Lower leg skin (tissue), 4 donors: ENCODE measurements at regions of chr1 and their contacts with region 1.

Region 1: DNA sequence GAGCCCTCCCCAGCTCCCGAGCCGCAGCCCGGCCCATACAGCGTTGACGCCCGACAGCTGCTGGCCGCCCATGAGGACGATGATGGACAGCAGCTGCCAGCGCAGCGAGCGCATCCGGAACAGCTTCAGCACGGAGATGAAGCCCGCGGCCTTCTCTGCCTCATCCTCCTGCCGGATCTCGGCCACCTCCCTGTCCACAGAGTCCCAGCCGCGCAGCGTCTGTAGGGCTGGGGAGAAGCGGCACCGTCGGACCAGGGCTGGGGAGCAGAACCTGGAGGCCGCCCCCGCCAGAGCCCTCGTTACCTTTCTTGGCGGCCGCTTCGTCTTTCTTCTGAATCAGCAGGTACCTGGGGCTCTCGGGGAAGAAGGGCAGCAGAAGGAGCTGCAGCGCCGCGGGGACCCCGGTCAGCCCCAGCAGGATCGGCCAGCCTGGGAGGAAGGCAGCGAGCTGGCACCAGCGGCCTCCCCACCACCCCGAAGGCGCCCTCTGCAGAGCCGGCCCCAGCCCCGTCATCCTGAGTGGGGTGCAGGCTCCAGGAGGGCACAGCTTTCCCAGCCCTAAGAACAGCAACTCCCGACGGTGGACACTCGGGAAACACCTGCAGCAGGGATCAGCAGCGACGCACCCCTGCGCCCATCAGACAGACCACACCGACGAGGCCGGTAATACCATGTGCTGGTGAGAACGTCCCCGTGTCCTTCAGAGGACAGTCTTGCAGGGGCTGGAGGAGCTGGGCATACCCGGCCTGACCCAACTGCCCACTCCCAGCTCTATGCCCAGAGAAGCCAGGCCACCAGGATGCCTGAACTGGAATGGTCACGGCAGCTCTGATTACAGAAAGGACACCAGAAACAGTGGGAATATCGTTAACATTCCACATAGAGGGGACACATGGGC is 13.8 kb upstream of the SLC2A7 start:
- DNase-seq: no peak
- H3K4me3 ChIP-seq: no peak overlapping the region
- CTCF ChIP-seq: no peak
- POLR2A ChIP-seq: no peak

Region 2: GRCh38 chr1:7721940-7722669 is 1317.9 kb before region 1 on chr1:
- intact Hi-C with region 1: loop called (anchors 5 kb)
- DNase-seq: no peak
- H3K4me3 ChIP-seq: no peak overlapping the region
- CTCF ChIP-seq: no peak
- POLR2A ChIP-seq: no peak